Activated CD8-positive, alpha-beta T cell treated with anti-CD3 and anti-CD28 coated beads, Interleukin-2, amount 10 ng/mL, durations not matched to agents 7 days and 5 days (primary cell): ENCODE measurements at regions of chr11 and their contacts with region 1.

Region 1: DNA sequence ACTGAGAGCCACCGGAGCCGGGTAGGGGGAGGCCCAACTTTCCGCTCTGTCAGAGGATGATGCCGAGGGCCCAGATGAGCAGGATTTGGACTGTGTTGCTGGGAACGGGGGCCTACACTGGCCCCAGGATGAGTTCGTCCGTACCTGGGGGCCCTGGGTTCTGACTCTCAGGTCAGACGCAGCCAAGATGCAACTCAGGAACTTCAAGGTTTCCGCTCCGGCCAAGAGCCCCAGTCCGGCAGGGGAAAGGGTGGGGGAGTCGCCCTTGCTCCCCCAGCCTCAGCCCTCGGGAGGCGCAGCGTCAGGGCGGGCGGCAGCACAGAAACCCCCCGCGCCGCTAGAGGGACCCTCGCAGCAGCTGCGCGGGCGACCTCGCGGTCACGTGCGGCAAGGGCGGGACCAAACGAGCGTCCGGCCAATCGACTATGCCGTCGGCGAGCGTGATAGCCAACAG is 241 bp upstream of the ARL2 start:
- DNase-seq: peak; percentile 89
- ATAC-seq: peak; percentile 86
- H3K4me3 Mint-ChIP-seq: peak overlapping the region; percentile 81
- H3K27ac Mint-ChIP-seq: peak overlapping the region; percentile 94
- H3K4me1 Mint-ChIP-seq: peaks cover 25% of the 10 kb centered on the region
- H3K27me3 Mint-ChIP-seq: no peaks in the 10 kb centered on the region

Region 2: GRCh38 chr11:64854534-64855429 is 158.9 kb before region 1 on chr11:
- CTCF ChIA-PET with region 1: interaction called, 10 read pairs
- POLR2A ChIA-PET with region 1: no interaction called
- DNase-seq: no peak
- ATAC-seq: no peak
- H3K4me3 Mint-ChIP-seq: peak overlapping the region; percentile 46
- H3K27ac Mint-ChIP-seq: peak overlapping the region; percentile 86
- H3K4me1 Mint-ChIP-seq: peaks cover 90% of the 10 kb centered on the region
- H3K27me3 Mint-ChIP-seq: no peaks in the 10 kb centered on the region

Region 3: DNA sequence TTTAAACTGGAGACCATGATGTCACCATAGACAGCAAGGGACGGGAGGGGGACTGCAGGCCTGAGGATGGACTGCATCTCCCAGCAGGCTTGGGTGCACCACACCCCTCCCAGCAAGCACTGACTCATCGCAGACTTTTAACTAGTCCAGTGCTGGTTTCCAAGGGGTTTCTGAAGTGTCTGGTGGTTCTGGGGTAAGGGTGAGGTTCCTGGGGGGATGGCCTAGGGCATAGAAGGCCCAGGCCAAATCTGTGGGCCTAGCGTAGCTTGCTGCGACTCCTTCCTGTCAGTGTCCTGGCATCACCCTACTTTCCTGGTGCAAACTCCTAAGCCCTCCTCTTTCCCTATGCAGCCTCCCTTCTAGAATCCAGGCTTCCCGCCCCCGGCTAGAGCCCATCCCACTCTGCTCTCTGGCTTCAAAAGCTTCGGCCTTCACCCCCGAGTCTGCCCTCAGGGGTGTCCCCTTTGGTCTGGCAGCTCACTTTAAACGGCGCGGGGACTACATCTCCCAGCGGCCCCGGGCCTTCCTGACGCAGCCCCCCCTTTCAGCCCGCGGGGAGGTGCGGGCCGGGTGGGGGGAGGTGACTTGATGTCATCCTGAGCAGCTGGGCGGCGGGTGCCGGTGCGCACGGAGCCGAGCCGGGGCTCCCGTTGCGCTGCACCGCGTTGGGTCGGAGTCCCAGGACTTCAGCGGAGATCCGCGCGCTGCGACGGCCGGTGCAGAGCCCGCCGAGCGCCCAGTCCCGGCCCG is 89.4 kb before region 1 on chr11 and contains the start of gene PPP2R5B:
- CTCF ChIA-PET with region 1: interaction called, 14 read pairs
- POLR2A ChIA-PET with region 1: interaction called, 4 read pairs
- DNase-seq: peak; percentile 94
- ATAC-seq: peak; percentile 92
- H3K4me3 Mint-ChIP-seq: peak within 1 kb of the TSS; percentile 93
- H3K27ac Mint-ChIP-seq: peak within 1 kb of the TSS; percentile 98
- H3K4me1 Mint-ChIP-seq: peaks cover 17% of the 10 kb centered on the region
- H3K27me3 Mint-ChIP-seq: no peaks in the 10 kb centered on the region
- total RNA-seq, gene PPP2R5B: 13.7 to 14.0 TPM

Region 4: GRCh38 chr11:65027213-65028067 is 13.7 kb after region 1 on chr11 and contains the start of gene SNX15:
- CTCF ChIA-PET with region 1: interaction called, 47 read pairs
- POLR2A ChIA-PET with region 1: interaction called, 7 read pairs
- DNase-seq: peak; percentile 96
- ATAC-seq: peak; percentile 92
- H3K4me3 Mint-ChIP-seq: peak within 1 kb of the TSS; percentile 75
- H3K27ac Mint-ChIP-seq: peak within 1 kb of the TSS; percentile 91
- H3K4me1 Mint-ChIP-seq: peaks cover 22% of the 10 kb centered on the region
- H3K27me3 Mint-ChIP-seq: peaks cover 2% of the 10 kb centered on the region
- total RNA-seq, gene SNX15: 21.2 to 25.7 TPM

Region 5: DNA sequence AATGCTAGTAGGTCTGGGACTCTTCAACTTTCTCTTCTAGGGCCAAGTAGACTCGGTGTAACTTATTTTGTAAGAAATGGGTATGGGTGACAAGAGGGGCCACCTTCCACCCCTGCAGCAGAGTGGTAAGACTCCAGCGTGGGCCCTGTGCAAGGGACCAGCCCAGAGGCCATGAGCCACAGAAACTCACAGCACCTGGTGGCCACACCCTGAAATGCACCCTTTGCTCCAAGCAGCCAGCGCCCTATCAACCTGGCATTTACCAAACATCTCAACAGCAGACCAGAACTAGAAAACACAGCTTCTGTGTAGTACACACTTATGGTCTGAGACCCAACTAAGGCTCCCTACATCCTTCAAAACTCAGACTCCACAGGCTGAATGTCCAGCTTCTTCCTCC is 64.4 kb after region 1 on chr11:
- CTCF ChIA-PET with region 1: interaction called, 26 read pairs
- POLR2A ChIA-PET with region 1: interaction called, 6 read pairs
- DNase-seq: peak; percentile 79
- ATAC-seq: peak; percentile 87
- H3K4me3 Mint-ChIP-seq: peak overlapping the region; percentile 4
- H3K27ac Mint-ChIP-seq: peak overlapping the region; percentile 72
- H3K4me1 Mint-ChIP-seq: peaks cover 63% of the 10 kb centered on the region
- H3K27me3 Mint-ChIP-seq: no peaks in the 10 kb centered on the region

Region 6: GRCh38 chr11:65111744-65112414 is 98.2 kb after region 1 on chr11 and contains the start of gene TM7SF2:
- CTCF ChIA-PET with region 1: interaction called, 39 read pairs
- POLR2A ChIA-PET with region 1: interaction called, 9 read pairs
- DNase-seq: peak; percentile 97
- ATAC-seq: peak; percentile 78
- H3K4me3 Mint-ChIP-seq: peak within 1 kb of the TSS; percentile 89
- H3K27ac Mint-ChIP-seq: peak within 1 kb of the TSS; percentile 91
- H3K4me1 Mint-ChIP-seq: peaks cover 52% of the 10 kb centered on the region
- H3K27me3 Mint-ChIP-seq: no peaks in the 10 kb centered on the region
- total RNA-seq, gene TM7SF2: 25.3 to 26.1 TPM

Region 7: DNA sequence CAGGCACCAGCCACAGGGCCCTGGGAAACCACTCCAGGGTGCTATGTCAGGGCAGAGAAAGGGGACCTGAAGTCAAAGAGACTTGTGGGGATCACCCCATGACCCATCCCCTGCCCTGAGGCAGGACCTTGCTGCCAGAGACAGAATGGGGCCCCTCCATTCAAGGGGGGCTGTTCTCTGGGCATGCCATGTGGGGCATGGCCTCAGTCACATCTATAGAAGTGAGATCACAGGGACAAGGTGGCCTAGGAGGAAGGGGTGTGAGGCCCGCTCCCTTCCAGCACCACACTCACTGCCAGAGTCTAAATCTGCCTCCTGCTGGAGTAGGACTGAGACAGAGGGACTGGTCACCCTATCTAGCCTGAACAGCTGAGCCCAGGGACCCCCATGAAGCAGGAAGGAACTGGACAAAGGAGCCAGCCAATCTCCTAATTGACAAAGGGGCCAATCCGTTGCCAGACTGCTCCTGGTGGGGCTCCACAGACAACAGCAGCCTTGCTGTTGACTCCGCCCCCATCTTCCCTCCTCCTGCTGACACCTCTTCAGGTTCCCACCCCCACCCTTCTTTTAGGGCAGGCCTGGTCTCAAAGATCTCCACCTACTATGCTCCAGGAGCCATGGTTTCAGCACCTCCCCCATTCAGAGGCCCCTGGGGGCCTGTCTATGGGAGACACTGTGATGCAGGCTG is 434.8 kb after region 1 on chr11:
- CTCF ChIA-PET with region 1: no interaction called
- POLR2A ChIA-PET with region 1: no interaction called
- DNase-seq: no peak
- ATAC-seq: peak; percentile 5
- H3K4me3 Mint-ChIP-seq: no peak overlapping the region
- H3K27ac Mint-ChIP-seq: peak overlapping the region; percentile 15
- H3K4me1 Mint-ChIP-seq: peaks cover 11% of the 10 kb centered on the region
- H3K27me3 Mint-ChIP-seq: no peaks in the 10 kb centered on the region